OCI-LY7 (cell line): ENCODE measurements at regions of chr3 and their contacts with region 1.

Region 1: GRCh38 chr3:47243419-47244147 is 39.0 kb downstream of the KIF9 start:
- DNase-seq: peak; percentile 23
- H3K4me3 ChIP-seq: no peak overlapping the region
- H3K27ac ChIP-seq: no peak overlapping the region
- H3K4me1 ChIP-seq: no peaks in the 10 kb centered on the region
- CTCF ChIP-seq: 0 out of 2 replicates have a peak, but pooled peaks have one; percentile 19

Region 2: GRCh38 chr3:47365213-47366153 is 121.9 kb after region 1 on chr3:
- CTCF ChIA-PET with region 1: no interaction called
- POLR2A ChIA-PET with region 1: no interaction called
- intact Hi-C with region 1: loop called (anchors 10 kb)
- DNase-seq: no peak
- H3K4me3 ChIP-seq: no peak overlapping the region
- H3K27ac ChIP-seq: no peak overlapping the region
- H3K4me1 ChIP-seq: peaks cover 7% of the 10 kb centered on the region
- CTCF ChIP-seq: no peak